ENCODE measurements at regions of chr14 and their contacts with region 1.

Region 1: GRCh38 chr14:30840086-30840779 is 34.1 kb upstream of the COCH start:
- DNase-seq: no peak
- ATAC-seq: no peak
- H3K4me3 ChIP-seq: no peak overlapping the region
- H3K27ac ChIP-seq: no peak overlapping the region
- H3K4me1 ChIP-seq: no peaks in the 10 kb centered on the region
- H3K27me3 ChIP-seq: peaks cover 5% of the 10 kb centered on the region; the same call in 1 of the 2 replicates
- CTCF ChIP-seq: no peak
- POLR2A ChIP-seq: no peak
- RAD21 ChIP-seq: no peak

Region 2: GRCh38 chr14:31954991-31955390 is 1114.8 kb after region 1 on chr14:
- CTCF ChIA-PET with region 1: no interaction called
- POLR2A ChIA-PET with region 1: interaction called, 13 read pairs
- dilution Hi-C with region 1: no loop called
- in situ Hi-C with region 1: no loop called
- intact Hi-C with region 1: no loop called
- DNase-seq: peak; percentile 18
- ATAC-seq: no peak
- H3K4me3 ChIP-seq: no peak overlapping the region
- H3K27ac ChIP-seq: no peak overlapping the region
- H3K4me1 ChIP-seq: peaks cover 16% of the 10 kb centered on the region
- H3K27me3 ChIP-seq: no peaks in the 10 kb centered on the region
- CTCF ChIP-seq: no peak
- POLR2A ChIP-seq: no peak
- RAD21 ChIP-seq: no peak